MCF 10A (cell line): ENCODE measurements at regions of chr3 and their contacts with region 1.

Region 1: DNA sequence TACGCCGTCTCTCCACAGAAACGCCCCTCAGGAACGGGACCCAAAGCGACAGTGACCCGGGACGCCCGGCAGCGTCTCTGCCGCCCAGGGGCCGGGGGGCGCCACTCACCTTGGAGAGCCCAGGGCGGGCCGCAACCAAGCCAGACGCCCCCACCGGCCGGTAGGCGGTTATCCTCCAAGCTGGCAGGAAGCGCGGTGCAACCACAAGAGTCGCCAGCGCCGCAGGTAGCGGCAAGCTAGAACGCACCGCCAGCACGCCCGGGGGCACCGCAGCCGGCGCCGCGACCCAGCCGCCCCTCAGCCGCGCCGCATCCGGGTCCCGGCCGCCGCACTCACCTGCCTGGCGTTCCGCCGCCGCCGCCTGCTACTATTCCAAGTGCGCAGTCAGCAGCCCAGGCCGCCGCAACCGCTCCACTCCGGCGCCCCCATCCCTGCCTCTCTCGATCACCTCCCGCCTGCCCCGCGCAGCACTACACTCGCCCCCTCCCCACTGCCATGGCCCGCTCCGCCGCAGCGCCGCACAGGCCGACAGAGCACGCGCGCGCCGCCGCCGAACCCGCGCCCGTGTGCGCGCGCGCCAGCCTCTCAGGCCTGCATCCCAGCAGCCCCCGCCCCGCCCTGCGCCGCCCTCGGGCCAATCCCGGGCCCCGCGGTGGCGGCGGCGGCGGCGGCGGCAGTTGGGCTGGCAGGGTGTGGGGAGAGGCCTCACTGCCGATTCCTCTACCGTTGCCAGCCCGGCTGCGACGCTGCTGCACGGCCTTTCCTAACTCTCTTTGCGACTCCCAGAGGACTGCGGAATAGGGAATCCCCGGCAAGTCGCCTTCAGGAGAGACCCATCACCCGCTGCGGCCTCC is at the start of gene PIK3CB:
- DNase-seq: peak; percentile 85
- H3K4me3 Mint-ChIP-seq: peak within 1 kb of the TSS; percentile 82
- H3K27ac Mint-ChIP-seq: peak within 1 kb of the TSS; percentile 90
- H3K4me1 Mint-ChIP-seq: peaks cover 23% of the 10 kb centered on the region
- H3K27me3 Mint-ChIP-seq: no peaks in the 10 kb centered on the region
- CTCF ChIP-seq: no peak
- total RNA-seq, gene PIK3CB: 21.0 and 21.1 TPM in 2 replicates

Region 2: DNA sequence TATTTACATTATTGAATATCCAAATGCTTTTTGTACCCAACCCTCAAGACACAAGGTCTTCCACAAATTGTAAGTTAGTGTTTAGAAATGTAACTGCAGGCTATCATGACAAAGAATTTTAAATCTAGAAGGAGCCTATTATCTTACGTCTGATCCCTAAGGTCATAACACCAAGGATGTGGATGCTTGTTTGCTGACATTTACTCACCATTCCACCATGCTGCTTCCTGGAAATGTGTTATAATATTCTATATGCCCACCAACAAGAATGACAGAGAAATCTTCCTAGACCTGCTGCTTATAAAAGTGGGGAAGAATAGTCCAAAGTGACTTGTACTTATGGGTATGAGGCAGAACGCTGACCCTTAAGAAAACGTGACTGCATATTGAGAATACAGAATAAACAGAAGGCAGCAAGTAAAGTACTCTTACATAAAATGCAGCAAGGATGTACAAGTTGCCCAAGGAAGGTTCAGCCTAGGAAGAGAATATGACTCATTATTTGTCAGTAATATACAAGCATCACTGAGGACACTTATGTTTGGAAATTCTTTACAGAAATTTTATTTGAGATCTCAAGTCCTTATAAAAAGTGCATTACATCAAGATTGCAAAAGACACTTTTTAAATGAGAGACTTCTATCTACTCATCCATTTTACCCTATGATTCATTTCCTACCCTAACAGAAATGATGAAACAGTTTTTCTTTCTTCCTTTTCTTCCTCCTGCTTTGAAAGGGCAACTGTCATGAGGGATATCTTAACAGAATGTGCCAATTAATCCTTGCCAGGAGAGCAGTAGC is 340.6 kb before region 1 on chr3:
- CTCF ChIA-PET with region 1: no interaction called
- POLR2A ChIA-PET with region 1: no interaction called
- intact Hi-C with region 1: loop called (anchors 10 kb)
- DNase-seq: peak; percentile 86
- H3K4me3 Mint-ChIP-seq: no peak overlapping the region
- H3K27ac Mint-ChIP-seq: peak overlapping the region; percentile 14
- H3K4me1 Mint-ChIP-seq: peaks cover 16% of the 10 kb centered on the region
- H3K27me3 Mint-ChIP-seq: no peaks in the 10 kb centered on the region
- CTCF ChIP-seq: no peak

Region 3: GRCh38 chr3:138694287-138695007 is 140.1 kb before region 1 on chr3:
- CTCF ChIA-PET with region 1: no interaction called
- POLR2A ChIA-PET with region 1: interaction called, 3 read pairs
- intact Hi-C with region 1: loop called (anchors 5 kb)
- DNase-seq: peak; percentile 80
- H3K4me3 Mint-ChIP-seq: peak overlapping the region; percentile 2
- H3K27ac Mint-ChIP-seq: peak overlapping the region; percentile 43
- H3K4me1 Mint-ChIP-seq: peaks cover 8% of the 10 kb centered on the region
- H3K27me3 Mint-ChIP-seq: no peaks in the 10 kb centered on the region
- CTCF ChIP-seq: no peak

Region 4: GRCh38 chr3:138774529-138775253 is 59.9 kb before region 1 on chr3:
- CTCF ChIA-PET with region 1: no interaction called
- POLR2A ChIA-PET with region 1: interaction called, 19 read pairs
- intact Hi-C with region 1: loop called (anchors 2 kb)
- DNase-seq: peak; percentile 98
- H3K4me3 Mint-ChIP-seq: no peak overlapping the region
- H3K27ac Mint-ChIP-seq: peak overlapping the region; percentile 96
- H3K4me1 Mint-ChIP-seq: peaks cover 18% of the 10 kb centered on the region
- H3K27me3 Mint-ChIP-seq: no peaks in the 10 kb centered on the region
- CTCF ChIP-seq: no peak

Region 5: GRCh38 chr3:138824114-138824506 is 10.5 kb before region 1 on chr3:
- CTCF ChIA-PET with region 1: no interaction called
- POLR2A ChIA-PET with region 1: interaction called, 11 read pairs
- intact Hi-C with region 1: no loop called
- DNase-seq: no peak
- H3K4me3 Mint-ChIP-seq: no peak overlapping the region
- H3K27ac Mint-ChIP-seq: peak overlapping the region; percentile 36
- H3K4me1 Mint-ChIP-seq: peaks cover 5% of the 10 kb centered on the region
- H3K27me3 Mint-ChIP-seq: no peaks in the 10 kb centered on the region
- CTCF ChIP-seq: no peak

Region 6: DNA sequence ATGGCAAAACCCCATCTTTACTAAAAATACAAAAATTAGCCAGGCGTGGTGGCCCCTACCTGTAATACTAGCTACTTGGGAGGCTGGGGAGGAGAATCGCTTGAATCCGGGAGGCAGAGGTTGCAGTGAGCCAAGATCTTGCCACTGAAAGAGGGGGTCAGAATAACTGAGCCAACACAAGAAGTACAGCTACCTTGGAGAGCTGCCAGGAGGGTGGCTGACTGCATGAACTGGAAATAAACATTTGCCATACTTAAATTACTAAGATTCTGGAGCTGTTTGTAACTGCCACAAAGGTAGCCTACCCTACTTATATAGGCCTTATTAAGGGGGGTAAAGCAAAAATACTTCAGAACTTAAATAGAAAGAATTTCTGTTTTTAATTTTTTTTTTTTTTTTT is 15.6 kb after region 1 on chr3:
- CTCF ChIA-PET with region 1: no interaction called
- POLR2A ChIA-PET with region 1: no interaction called
- intact Hi-C with region 1: no loop called
- DNase-seq: peak; percentile 8
- H3K4me3 Mint-ChIP-seq: no peak overlapping the region
- H3K27ac Mint-ChIP-seq: no peak overlapping the region
- H3K4me1 Mint-ChIP-seq: no peaks in the 10 kb centered on the region
- H3K27me3 Mint-ChIP-seq: no peaks in the 10 kb centered on the region
- CTCF ChIP-seq: no peak

Region 7: DNA sequence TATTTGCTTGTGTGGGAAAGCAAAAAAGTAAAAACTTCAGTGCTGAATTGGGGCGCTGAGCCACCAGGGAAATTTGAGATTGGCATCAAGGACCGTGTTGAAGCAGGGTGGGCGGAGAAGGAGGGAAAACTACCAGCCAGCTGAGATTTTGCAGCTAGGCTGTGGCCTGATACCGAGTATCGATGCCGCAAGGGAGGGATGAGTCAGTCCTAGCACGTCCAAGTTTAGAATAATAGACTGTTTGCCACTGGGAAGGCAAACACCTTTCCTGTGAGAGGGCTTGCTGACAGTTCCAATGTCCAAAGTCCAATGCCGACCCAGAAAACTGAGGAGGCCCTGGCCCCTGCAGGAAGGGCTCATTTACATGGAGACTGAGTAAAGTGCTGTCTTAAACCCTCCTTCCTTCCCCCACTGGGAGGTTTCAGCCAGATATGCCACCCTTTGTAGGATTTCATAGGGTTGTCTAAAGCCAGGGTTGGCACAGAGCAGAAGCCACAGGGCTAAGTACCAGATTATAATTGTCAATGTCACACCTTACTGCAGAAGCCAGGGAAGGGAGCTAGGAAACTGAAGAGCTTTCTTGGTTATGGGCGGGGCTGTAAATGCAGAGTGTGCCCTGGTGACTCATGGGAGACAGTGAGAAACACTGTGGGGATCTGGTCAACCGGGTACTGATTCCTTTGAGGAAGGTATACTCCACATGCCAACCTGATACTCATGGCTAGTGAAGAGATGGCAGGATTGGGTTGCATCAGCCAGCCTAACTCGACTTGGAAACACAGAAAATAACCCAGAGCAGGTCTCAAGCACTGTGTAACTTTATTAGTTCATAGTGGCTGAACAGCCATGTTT is 28.6 kb after region 1 on chr3:
- CTCF ChIA-PET with region 1: interaction called, 4 read pairs
- POLR2A ChIA-PET with region 1: interaction called, 24 read pairs
- intact Hi-C with region 1: no loop called
- DNase-seq: peak; percentile 94
- H3K4me3 Mint-ChIP-seq: peak overlapping the region; percentile 46
- H3K27ac Mint-ChIP-seq: peak overlapping the region; percentile 89
- H3K4me1 Mint-ChIP-seq: peaks cover 20% of the 10 kb centered on the region
- H3K27me3 Mint-ChIP-seq: no peaks in the 10 kb centered on the region
- CTCF ChIP-seq: no peak